Activated naive CD4-positive, alpha-beta T cell treated with anti-CD3 and anti-CD28 coated beads for 36 hours (primary cell): ENCODE measurements at regions of chr1 and their contacts with region 1.

Region 1: GRCh38 chr1:119711804-119712341 is at the start of gene PHGDH:
- DNase-seq: peak; percentile 85
- H3K4me3 Mint-ChIP-seq: peak within 1 kb of the TSS; percentile 88
- H3K27ac Mint-ChIP-seq: peak within 1 kb of the TSS; percentile 84
- H3K4me1 Mint-ChIP-seq: peaks cover 31% of the 10 kb centered on the region
- H3K27me3 Mint-ChIP-seq: no peaks in the 10 kb centered on the region
- total RNA-seq, gene PHGDH: 422 to 439 TPM

Region 2: GRCh38 chr1:118788463-118788862 is 923.4 kb before region 1 on chr1:
- CTCF ChIA-PET with region 1: no interaction called
- intact Hi-C with region 1: no loop called
- DNase-seq: no peak
- H3K4me3 Mint-ChIP-seq: no peak overlapping the region
- H3K27ac Mint-ChIP-seq: no peak overlapping the region
- H3K4me1 Mint-ChIP-seq: no peaks in the 10 kb centered on the region
- H3K27me3 Mint-ChIP-seq: no peaks in the 10 kb centered on the region

Region 3: DNA sequence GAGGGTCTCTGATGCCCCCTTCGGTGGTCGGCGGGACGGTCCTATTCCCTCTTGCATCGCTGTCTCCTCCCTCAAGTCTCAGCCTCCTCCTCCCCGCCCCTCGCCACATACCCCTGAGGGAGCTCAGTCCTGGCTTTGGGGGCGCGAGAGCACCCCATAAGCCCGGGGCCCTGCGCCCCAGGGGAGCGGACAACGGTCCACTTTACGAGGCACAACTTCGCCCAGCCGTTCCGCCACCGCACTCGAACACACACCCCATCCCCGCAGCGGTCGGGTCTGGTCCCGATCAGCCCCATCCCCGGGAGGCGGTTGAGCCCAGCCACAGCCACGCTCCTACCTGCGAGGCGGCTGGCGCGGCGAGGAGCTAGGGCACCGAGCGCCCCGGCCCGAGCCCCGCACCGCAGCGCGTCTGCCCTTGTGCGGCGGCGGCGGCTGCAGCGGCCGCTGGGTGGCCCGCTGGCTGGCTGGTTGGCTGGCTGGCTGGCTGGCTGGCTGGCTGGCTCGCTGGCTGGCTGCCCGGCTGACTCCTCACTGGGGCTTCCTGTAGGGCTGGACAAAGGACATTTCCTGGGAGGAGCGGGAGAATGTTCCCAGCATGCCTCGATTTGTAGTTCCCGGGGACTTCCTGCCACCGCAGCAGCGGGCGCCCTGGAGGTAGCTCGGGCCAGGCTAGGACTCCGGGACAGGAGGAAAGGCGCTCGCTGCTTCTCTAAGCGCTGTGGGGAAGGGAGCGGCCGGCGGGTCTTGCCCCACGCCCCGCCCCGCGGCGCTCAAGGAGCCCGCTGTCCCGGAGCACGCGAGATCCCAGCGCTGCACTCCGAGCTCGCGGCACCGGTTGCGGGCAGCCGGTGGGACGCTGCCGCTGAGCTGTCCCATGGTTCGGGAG is 63.9 kb before region 1 on chr1 and contains the start of gene ZNF697:
- CTCF ChIA-PET with region 1: no interaction called
- intact Hi-C with region 1: loop called (anchors 2 kb)
- DNase-seq: peak; percentile 79
- H3K4me3 Mint-ChIP-seq: peak within 1 kb of the TSS; percentile 73
- H3K27ac Mint-ChIP-seq: no peak within 1 kb of the TSS
- H3K4me1 Mint-ChIP-seq: peaks cover 20% of the 10 kb centered on the region
- H3K27me3 Mint-ChIP-seq: peaks cover 61% of the 10 kb centered on the region
- total RNA-seq, gene ZNF697: 0.41 to 0.59 TPM